ENCODE measurements at regions of chr6 and their contacts with region 1.

Region 1: GRCh38 chr6:43053545-43054205 is at the start of gene CUL7:
- DNase-seq: peak; percentile 98
- H3K4me3 Mint-ChIP-seq: peak within 1 kb of the TSS; percentile 97
- H3K27ac Mint-ChIP-seq: peak within 1 kb of the TSS; percentile 88
- H3K4me1 Mint-ChIP-seq: peaks cover 21% of the 10 kb centered on the region
- H3K27me3 Mint-ChIP-seq: no peaks in the 10 kb centered on the region
- CTCF ChIP-seq: no peak
- total RNA-seq, gene CUL7: 25.5 and 25.9 TPM in 2 replicates

Region 2: GRCh38 chr6:43035495-43036194 is 18.0 kb before region 1 on chr6:
- CTCF ChIA-PET with region 1: interaction called, 12 read pairs
- intact Hi-C with region 1: no loop called
- DNase-seq: no peak
- H3K4me3 Mint-ChIP-seq: no peak overlapping the region
- H3K27ac Mint-ChIP-seq: no peak overlapping the region
- H3K4me1 Mint-ChIP-seq: no peaks in the 10 kb centered on the region
- H3K27me3 Mint-ChIP-seq: no peaks in the 10 kb centered on the region
- CTCF ChIP-seq: no peak